ENCODE measurements at regions of chr4 and their contacts with region 1.

Region 1: GRCh38 chr4:56799824-56800756 is 21.4 kb downstream of the SPINK2 start:
- H3K4me3 Mint-ChIP-seq: peak overlapping the region; percentile 90
- H3K27ac Mint-ChIP-seq: peak overlapping the region; percentile 83
- H3K4me1 Mint-ChIP-seq: peaks cover 22% of the 10 kb centered on the region
- H3K27me3 Mint-ChIP-seq: no peaks in the 10 kb centered on the region

Region 2: GRCh38 chr4:56271131-56271530 is 529.0 kb before region 1 on chr4:
- intact Hi-C with region 1: no loop called
- H3K4me3 Mint-ChIP-seq: no peak overlapping the region
- H3K27ac Mint-ChIP-seq: no peak overlapping the region
- H3K4me1 Mint-ChIP-seq: no peaks in the 10 kb centered on the region
- H3K27me3 Mint-ChIP-seq: no peaks in the 10 kb centered on the region

Region 3: DNA sequence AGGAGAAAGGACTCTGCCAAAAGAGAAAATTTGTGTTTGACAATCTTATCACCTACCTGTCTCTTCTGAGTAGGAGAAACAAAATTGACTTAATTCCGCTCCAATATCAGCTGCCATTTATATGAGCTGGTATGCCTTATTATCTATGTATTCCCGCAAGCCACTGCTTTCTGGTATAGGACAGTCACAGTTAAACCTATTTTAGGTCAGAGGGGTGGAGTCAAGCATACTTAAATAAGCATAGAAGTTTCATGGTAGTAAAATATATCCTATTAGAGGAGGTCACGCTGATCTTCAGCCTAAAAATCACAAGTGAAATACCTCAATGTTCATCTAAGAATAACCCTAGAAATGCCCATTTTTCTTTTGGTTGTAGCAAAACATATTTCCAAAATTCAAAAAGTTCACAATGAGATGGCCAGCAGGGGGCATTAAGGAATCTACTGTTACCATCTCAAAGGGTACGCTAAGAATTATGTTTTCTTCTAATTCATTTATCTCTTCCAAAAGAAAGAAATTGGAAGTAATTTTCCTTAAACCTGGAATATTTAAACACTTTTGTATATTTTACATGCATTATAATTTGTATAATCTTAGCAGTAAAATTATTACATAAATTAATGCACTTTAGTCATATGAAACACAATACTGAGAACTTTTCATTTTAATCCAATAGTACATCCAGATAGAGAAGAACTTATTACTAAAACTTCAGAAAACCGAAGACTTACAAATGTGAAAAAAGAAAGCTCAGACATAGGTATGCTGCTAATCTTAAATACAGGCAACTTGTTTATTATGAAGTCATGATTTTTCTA is 375.2 kb before region 1 on chr4:
- intact Hi-C with region 1: loop called (anchors 10 kb)
- H3K4me3 Mint-ChIP-seq: no peak overlapping the region
- H3K27ac Mint-ChIP-seq: no peak overlapping the region
- H3K4me1 Mint-ChIP-seq: no peaks in the 10 kb centered on the region
- H3K27me3 Mint-ChIP-seq: no peaks in the 10 kb centered on the region

Region 4: GRCh38 chr4:56575820-56576429 is 224.2 kb before region 1 on chr4:
- intact Hi-C with region 1: loop called (anchors 1 kb)
- H3K4me3 Mint-ChIP-seq: no peak overlapping the region
- H3K27ac Mint-ChIP-seq: no peak overlapping the region
- H3K4me1 Mint-ChIP-seq: no peaks in the 10 kb centered on the region
- H3K27me3 Mint-ChIP-seq: no peaks in the 10 kb centered on the region

Region 5: DNA sequence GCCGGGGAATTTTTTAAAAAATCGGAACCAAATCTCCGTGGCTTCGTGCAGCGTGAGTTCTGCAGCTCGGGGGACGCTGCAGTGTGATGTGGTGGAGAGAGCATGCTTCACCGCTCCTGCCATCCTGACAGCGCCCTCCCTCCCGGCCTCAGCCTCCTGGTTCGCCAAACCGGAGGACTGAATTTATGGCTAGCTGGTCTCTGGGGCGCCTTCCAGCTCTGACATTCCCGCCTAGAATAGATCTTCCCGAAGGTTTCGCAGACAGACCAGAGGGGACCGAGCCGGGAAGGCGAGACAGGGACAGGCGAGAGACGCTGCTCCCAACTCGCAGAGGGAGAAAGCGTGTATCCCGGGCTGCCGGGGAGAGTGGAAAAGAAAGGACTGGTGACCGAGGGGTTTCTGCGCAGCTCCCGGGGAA is 144.9 kb before region 1 on chr4:
- intact Hi-C with region 1: loop called (anchors 10 kb)
- H3K4me3 Mint-ChIP-seq: peak overlapping the region; percentile 82
- H3K27ac Mint-ChIP-seq: no peak overlapping the region
- H3K4me1 Mint-ChIP-seq: peaks cover 30% of the 10 kb centered on the region
- H3K27me3 Mint-ChIP-seq: peaks cover 50% of the 10 kb centered on the region

Region 6: DNA sequence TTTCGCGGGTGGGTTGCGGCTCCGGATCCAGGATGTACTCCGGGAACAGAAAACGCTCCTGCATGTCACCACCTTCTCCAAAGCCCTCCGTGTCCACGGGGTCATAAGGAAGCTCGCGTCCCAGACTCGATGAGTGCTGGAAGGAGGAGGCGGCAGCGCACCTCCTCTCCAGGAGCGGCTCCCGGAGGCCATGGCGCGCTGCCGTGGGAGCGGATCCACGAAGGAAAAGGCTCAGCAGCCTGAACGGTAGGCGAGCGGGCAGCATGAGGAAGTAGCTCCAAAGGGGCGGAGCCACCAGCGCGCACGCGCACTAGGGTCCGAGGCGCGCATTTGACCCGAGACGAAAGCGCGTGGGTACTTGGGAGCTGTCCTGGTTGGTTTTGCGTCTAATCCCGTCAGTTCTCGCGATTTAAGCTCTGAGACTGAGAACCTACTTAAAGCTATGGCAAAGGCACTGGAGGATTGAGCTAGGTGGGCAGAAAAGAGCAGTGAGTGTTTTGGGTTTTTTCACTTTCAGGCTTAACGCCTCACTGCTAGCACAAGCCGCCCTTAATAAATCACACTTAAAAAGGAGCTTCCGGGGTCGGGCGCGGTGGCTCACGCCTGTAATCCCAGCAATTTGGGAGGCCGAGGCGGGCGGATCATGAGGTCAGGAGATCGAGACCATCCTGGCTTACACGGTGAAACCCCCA is 177.4 kb after region 1 on chr4 and contains the start of gene NOA1:
- intact Hi-C with region 1: no loop called
- H3K4me3 Mint-ChIP-seq: peak within 1 kb of the TSS; percentile 93
- H3K27ac Mint-ChIP-seq: peak within 1 kb of the TSS; percentile 96
- H3K4me1 Mint-ChIP-seq: peaks cover 39% of the 10 kb centered on the region
- H3K27me3 Mint-ChIP-seq: no peaks in the 10 kb centered on the region